Activated T-helper 2 cell treated with anti-CD3 and anti-CD28 coated beads, Interferon-gamma antibody, Interleukin-2, Interleukin-4, amounts not matched to agents 10 μg/mL and 5 μg/mL and 100 μg/mL, durations not matched to agents 14 hours and 24 hours and 36 hours (primary cell): ENCODE measurements at regions of chr10 and their contacts with region 1.

Region 1: GRCh38 chr10:119705434-119705831 is 20.4 kb upstream of the INPP5F start:
- DNase-seq: no peak
- H3K4me3 Mint-ChIP-seq: peak overlapping the region; percentile 33
- H3K27ac Mint-ChIP-seq: peak overlapping the region; percentile 96
- H3K4me1 Mint-ChIP-seq: peaks cover 58% of the 10 kb centered on the region
- H3K27me3 Mint-ChIP-seq: no peaks in the 10 kb centered on the region

Region 2: GRCh38 chr10:119725828-119726675 is 20.6 kb after region 1 on chr10 and contains the start of gene INPP5F:
- intact Hi-C with region 1: loop called (anchors 1 kb)
- DNase-seq: peak; percentile 98
- H3K4me3 Mint-ChIP-seq: peak within 1 kb of the TSS; percentile 83
- H3K27ac Mint-ChIP-seq: peak within 1 kb of the TSS; percentile 80
- H3K4me1 Mint-ChIP-seq: peaks cover 33% of the 10 kb centered on the region
- H3K27me3 Mint-ChIP-seq: peaks cover 4% of the 10 kb centered on the region
- total RNA-seq, gene INPP5F: 10.2 and 11.9 TPM in 2 replicates

Region 3: GRCh38 chr10:119761106-119761505 is 55.7 kb after region 1 on chr10:
- intact Hi-C with region 1: no loop called
- DNase-seq: no peak
- H3K4me3 Mint-ChIP-seq: no peak overlapping the region
- H3K27ac Mint-ChIP-seq: no peak overlapping the region
- H3K4me1 Mint-ChIP-seq: peaks cover 12% of the 10 kb centered on the region
- H3K27me3 Mint-ChIP-seq: no peaks in the 10 kb centered on the region

Region 4: DNA sequence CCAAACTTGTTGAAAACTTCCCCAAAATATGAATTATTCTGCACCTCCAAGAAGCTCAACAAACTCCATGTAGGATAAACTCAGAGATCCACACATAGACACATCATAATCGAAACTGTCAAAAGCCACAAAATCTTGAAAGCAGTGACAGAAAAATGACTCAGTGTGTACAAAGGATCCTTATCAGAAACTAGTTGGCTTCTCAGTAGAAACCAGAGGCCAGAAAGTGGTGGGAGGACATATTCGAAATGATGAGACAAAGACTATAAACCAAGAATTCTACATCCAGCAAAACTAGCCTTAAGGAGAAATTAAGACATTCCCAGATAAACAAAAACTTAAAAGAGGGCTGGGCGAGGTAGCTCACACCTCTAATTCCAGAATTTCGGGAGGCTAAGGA is 128.8 kb after region 1 on chr10:
- intact Hi-C with region 1: loop called (anchors 1 kb)
- DNase-seq: no peak
- H3K4me3 Mint-ChIP-seq: no peak overlapping the region
- H3K27ac Mint-ChIP-seq: peak overlapping the region; percentile 47
- H3K4me1 Mint-ChIP-seq: peaks cover 19% of the 10 kb centered on the region
- H3K27me3 Mint-ChIP-seq: no peaks in the 10 kb centered on the region